MCF 10A (cell line): ENCODE measurements at regions of chrX and their contacts with region 1.

Region 1: GRCh38 chrX:119791438-119792231 is at the start of gene RPL39:
- DNase-seq: peak; percentile 88
- H3K4me3 Mint-ChIP-seq: peak within 1 kb of the TSS; percentile 82
- H3K27ac Mint-ChIP-seq: peak within 1 kb of the TSS; percentile 96
- H3K4me1 Mint-ChIP-seq: no peaks in the 10 kb centered on the region
- H3K27me3 Mint-ChIP-seq: no peaks in the 10 kb centered on the region
- CTCF ChIP-seq: no peak
- total RNA-seq, gene RPL39: 1,826 and 1,944 TPM in 2 replicates

Region 2: GRCh38 chrX:119606280-119607015 is 185.2 kb before region 1 on chrX and contains the start of gene NKRF:
- CTCF ChIA-PET with region 1: no interaction called
- POLR2A ChIA-PET with region 1: interaction called, 15 read pairs
- intact Hi-C with region 1: no loop called
- DNase-seq: peak; percentile 89
- H3K4me3 Mint-ChIP-seq: peak within 1 kb of the TSS; percentile 88
- H3K27ac Mint-ChIP-seq: peak within 1 kb of the TSS; percentile 91
- H3K4me1 Mint-ChIP-seq: peaks cover 4% of the 10 kb centered on the region
- H3K27me3 Mint-ChIP-seq: no peaks in the 10 kb centered on the region
- CTCF ChIP-seq: no peak
- total RNA-seq, gene NKRF: 12.5 and 16.1 TPM in 2 replicates

Region 3: DNA sequence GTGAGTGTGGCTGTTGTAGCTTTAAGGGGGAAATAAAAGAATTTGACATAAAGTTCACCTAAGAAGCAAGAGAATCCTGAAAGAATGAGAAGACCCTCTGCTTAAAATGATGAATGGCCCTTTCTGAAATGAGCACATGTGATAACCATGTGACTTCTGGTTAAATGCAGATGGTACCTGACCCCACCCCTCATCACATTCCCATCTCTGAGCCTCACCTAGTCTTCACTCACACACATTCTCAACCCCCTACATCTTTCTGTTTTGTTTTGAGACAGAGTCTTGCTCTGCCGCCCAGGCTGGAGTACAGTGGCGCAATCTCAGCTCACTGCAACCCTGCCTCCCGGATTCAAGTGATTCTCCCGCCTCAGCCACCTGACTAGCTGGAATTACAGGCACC is 130.1 kb before region 1 on chrX:
- CTCF ChIA-PET with region 1: no interaction called
- POLR2A ChIA-PET with region 1: no interaction called
- intact Hi-C with region 1: no loop called
- DNase-seq: no peak
- H3K4me3 Mint-ChIP-seq: no peak overlapping the region
- H3K27ac Mint-ChIP-seq: no peak overlapping the region
- H3K4me1 Mint-ChIP-seq: peaks cover 5% of the 10 kb centered on the region
- H3K27me3 Mint-ChIP-seq: peaks cover 8% of the 10 kb centered on the region
- CTCF ChIP-seq: no peak

Region 4: DNA sequence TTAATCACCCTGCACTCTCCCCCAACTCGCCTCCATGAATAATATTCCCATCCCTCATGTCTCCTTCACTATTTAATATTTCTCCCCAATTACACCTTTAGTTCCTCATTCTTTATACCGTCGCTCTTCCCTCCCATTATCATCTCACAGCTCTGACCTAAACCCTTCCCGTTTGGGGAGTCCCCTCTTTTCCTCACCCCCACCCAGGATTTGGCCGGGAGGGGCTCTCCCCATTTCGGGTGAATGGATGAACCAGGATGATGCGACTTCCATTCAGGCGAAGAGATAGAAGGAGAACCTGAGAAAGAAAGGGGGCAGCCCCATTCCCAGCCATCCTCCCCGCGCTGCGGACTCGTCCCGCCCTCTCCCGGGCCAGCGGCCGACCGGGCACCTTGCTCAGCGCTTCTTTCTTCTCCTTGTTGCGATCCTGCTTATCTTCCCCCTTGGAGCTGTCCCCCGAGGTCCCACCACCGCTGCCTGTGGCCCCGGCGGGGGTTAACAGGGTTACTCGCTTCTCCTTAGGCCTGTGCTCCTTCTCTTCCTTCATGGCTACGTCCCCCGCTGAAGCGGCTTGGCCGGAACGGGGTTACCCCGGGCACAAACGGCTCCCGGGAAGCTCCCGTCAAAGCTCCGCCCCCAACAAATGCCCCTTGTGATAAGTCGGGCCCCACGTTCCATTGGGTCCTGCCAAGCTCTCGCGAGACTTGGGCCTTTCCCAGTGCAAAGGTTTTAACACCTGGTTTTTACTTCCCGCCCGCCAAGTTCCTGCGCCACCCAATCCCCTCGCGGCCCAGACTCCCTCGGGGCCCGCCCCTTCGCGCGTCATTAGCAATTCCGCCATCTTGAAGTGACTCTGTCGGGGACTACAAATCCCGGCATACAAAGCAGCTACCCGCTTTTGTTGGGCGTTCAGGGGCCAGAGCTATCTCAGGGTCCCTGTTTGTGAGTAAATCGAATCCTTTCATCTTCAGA is 61.0 kb after region 1 on chrX and contains the start of gene UPF3B:
- CTCF ChIA-PET with region 1: interaction called, 4 read pairs
- POLR2A ChIA-PET with region 1: interaction called, 50 read pairs
- intact Hi-C with region 1: no loop called
- DNase-seq: peak; percentile 98
- H3K4me3 Mint-ChIP-seq: peak within 1 kb of the TSS; percentile 97
- H3K27ac Mint-ChIP-seq: peak within 1 kb of the TSS; percentile 98
- H3K4me1 Mint-ChIP-seq: no peaks in the 10 kb centered on the region
- H3K27me3 Mint-ChIP-seq: no peaks in the 10 kb centered on the region
- CTCF ChIP-seq: no peak
- total RNA-seq, gene UPF3B: 17.4 and 18.5 TPM in 2 replicates

Region 5: GRCh38 chrX:119871599-119872395 is 80.2 kb after region 1 on chrX and contains the starts of genes NDUFA1 and RNF113A:
- CTCF ChIA-PET with region 1: interaction called, 6 read pairs
- POLR2A ChIA-PET with region 1: interaction called, 33 read pairs
- intact Hi-C with region 1: loop called (anchors 1 kb)
- DNase-seq: peak; percentile 86
- H3K4me3 Mint-ChIP-seq: peak within 1 kb of the TSS; percentile 91
- H3K27ac Mint-ChIP-seq: peak within 1 kb of the TSS; percentile 83
- H3K4me1 Mint-ChIP-seq: no peaks in the 10 kb centered on the region
- H3K27me3 Mint-ChIP-seq: no peaks in the 10 kb centered on the region
- CTCF ChIP-seq: no peak
- total RNA-seq, gene NDUFA1: 76.7 and 82.8 TPM in 2 replicates
- total RNA-seq, gene RNF113A: 19.0 and 23.0 TPM in 2 replicates

Region 6: GRCh38 chrX:119943185-119943988 is 151.8 kb after region 1 on chrX and contains the start of gene NKAP:
- CTCF ChIA-PET with region 1: no interaction called
- POLR2A ChIA-PET with region 1: interaction called, 10 read pairs
- intact Hi-C with region 1: no loop called
- DNase-seq: peak; percentile 86
- H3K4me3 Mint-ChIP-seq: peak within 1 kb of the TSS; percentile 82
- H3K27ac Mint-ChIP-seq: peak within 1 kb of the TSS; percentile 74
- H3K4me1 Mint-ChIP-seq: no peaks in the 10 kb centered on the region
- H3K27me3 Mint-ChIP-seq: peaks cover 5% of the 10 kb centered on the region
- CTCF ChIP-seq: no peak
- total RNA-seq, gene NKAP: 10.4 and 13.8 TPM in 2 replicates